ENCODE measurements at regions of chr4 and their contacts with region 1.

Region 1: DNA sequence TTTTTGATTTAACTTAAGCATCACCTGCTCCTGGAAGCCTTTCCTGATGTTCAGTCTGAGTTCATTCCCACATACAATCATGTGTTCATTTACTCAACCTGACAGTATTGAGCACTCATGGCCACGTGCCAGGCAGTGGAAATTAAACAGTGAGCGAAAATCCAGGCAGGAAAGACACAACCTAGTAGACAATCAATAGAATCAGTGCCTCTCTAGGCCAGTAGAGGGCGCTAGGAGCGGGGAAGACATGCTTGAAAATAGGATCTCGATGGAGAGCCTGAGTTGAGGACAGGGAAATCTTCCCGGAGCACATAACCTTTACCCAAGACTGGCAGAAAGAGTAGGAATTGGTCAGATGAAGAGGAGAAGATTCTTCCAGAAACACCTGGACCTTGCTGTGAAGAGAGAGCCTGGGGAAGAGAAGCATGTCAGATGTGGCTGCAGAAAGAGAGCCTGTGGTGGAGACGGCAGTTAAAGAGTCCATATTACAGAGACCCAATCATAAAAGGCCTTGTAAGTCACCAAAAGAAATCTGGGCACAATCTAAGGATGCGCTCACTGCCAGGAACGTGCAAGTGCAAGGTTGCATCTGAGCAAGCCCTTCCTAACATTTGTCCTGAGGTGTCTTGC is 103.5 kb downstream of the LDB2 start:
- DNase-seq: peak; percentile 62 to 90
- H3K4me3 ChIP-seq: no peak overlapping the region
- H3K4me1 ChIP-seq: peaks cover 7% of the 10 kb centered on the region
- H3K27me3 ChIP-seq: no peaks in the 10 kb centered on the region

Region 2: GRCh38 chr4:16916719-16917337 is 121.9 kb after region 1 on chr4:
- in situ Hi-C with region 1: loop called (anchors 10 kb)
- DNase-seq: peak; percentile 86 to 90
- H3K4me3 ChIP-seq: no peak overlapping the region
- H3K4me1 ChIP-seq: no peaks in the 10 kb centered on the region
- H3K27me3 ChIP-seq: no peaks in the 10 kb centered on the region

Region 3: DNA sequence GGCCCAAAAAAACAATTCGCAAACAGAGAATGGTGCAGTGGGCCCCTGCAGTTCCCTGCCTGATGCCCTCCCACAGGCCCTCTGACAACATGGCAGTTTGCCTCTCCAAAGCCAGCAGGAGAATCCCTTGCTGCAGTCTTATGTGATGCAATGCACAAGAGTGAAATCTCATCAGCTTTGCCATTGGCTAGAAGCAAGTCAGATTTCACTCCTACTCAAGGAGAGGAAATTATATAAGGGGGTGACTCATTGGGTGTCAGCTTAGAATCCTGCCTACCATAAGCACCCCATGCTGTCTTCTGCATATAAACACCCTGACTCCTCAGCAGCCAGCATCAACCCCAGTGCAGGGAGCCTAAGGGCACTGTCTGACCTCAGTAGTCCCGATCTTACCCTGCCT is 260.9 kb after region 1 on chr4:
- in situ Hi-C with region 1: no loop called
- DNase-seq: no peak
- H3K4me3 ChIP-seq: no peak overlapping the region
- H3K4me1 ChIP-seq: no peaks in the 10 kb centered on the region
- H3K27me3 ChIP-seq: no peaks in the 10 kb centered on the region

Region 4: GRCh38 chr4:17112292-17112659 is 317.3 kb after region 1 on chr4:
- in situ Hi-C with region 1: loop called (anchors 25 kb)
- DNase-seq: peak in 1 of 2 experiments; percentile 68
- H3K4me3 ChIP-seq: no peak overlapping the region
- H3K4me1 ChIP-seq: no peaks in the 10 kb centered on the region
- H3K27me3 ChIP-seq: no peaks in the 10 kb centered on the region